ENCODE measurements at regions of chr2 and their contacts with region 1.

Region 1: DNA sequence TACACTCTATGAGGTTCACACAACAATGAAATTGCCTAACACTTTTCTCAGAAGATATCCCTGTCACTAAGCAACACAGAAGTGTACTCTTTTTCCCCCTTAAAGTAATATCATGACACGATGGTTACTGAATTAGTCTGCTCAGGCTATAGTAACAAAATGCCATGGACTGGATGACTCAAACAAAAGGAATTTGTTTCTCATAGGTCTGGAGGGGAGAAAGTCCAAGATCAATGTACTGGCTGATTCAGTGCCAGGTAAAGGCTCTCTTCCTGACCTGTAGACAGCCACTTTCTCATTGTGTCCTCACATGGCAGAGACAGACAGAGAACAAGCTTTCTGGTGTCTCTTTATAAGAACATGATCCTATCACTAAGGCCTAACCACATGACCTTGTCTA is 211.9 kb downstream of the RBM43 start:
- DNase-seq: no peak
- ATAC-seq: no peak

Region 2: DNA sequence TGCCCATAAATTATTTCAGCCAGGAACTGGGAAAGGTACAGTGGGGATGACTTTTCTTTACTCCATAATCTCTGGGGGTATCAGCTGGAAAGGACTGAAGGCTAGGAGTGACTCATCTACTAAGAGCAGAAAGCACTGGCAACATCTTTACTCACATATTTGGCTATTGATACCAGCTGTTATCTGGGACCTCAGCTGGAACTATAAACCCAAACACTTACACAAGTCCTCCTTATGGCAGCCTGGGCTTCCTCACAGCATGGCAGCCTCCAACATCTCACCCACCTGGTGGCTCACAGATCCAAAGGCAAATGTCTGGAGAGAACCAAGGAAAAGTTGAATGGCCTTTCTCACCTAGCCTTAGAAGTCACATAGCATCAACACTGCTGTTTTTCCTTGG is 183.3 kb before region 1 on chr2:
- intact Hi-C with region 1: no loop called
- DNase-seq: no peak
- ATAC-seq: no peak

Region 3: GRCh38 chr2:150997702-150998440 is 51.9 kb before region 1 on chr2:
- intact Hi-C with region 1: no loop called
- DNase-seq: no peak
- ATAC-seq: peak; percentile 26

Region 4: GRCh38 chr2:151120011-151120410 is 70.3 kb after region 1 on chr2:
- intact Hi-C with region 1: no loop called
- DNase-seq: no peak
- ATAC-seq: no peak

Region 5: DNA sequence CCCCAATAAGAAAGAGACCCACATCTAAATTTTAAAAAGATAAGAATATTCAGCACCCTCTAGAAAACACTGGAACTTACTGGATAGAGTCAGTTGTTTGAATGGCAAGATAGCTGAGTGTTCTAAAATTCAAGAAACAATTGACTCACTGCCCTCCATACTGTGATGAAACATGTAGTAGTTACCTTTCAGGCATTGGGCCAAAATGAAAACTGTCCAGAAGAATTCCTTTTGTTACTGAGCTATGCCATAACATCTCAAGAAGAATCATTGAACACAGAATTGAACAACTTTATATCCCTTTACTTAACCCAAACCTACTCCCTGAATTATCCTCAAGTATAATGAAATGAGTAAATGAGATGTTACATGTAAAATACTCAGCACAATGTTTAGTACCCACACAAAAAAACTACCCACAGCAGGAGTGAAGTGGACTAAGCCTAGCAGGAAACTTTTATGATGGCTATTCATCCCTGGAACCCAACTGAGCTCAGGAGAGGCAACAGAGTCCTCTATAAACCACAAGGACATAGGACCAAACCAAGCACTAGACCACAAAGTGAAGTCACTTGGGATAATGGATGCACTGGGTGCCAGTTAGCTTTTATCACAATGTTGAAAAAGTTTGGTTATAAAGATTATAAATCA is 179.2 kb after region 1 on chr2:
- intact Hi-C with region 1: loop called (anchors 5 kb)
- DNase-seq: no peak
- ATAC-seq: no peak